CD8-positive, alpha-beta memory T cell (primary cell): ENCODE measurements at regions of chr3 and their contacts with region 1.

Region 1: GRCh38 chr3:120596116-120596852 is at the start of gene NDUFB4:
- DNase-seq: peak; percentile 92 to 98 (median 95)
- H3K4me3 ChIP-seq: peak within 1 kb of the TSS; percentile 99
- H3K4me3 Mint-ChIP-seq: peak within 1 kb of the TSS in 6 of 7 donors; percentile 86 to 99 (median 90)
- H3K27ac ChIP-seq: peak within 1 kb of the TSS; percentile 96
- H3K27ac Mint-ChIP-seq: peak within 1 kb of the TSS in 7 of 8 donors; percentile 96 to 100 (median 98)
- H3K4me1 ChIP-seq: peaks cover 35% of the 10 kb centered on the region
- H3K4me1 Mint-ChIP-seq: peaks cover 7 to 13% (median 10%) of the 10 kb centered on the region in 3 donors
- H3K27me3 ChIP-seq: no peaks in the 10 kb centered on the region
- H3K27me3 Mint-ChIP-seq: peaks cover 0 to 2% of the 10 kb centered on the region in 2 donors
- total RNA-seq, gene NDUFB4: 102 to 103 TPM

Region 2: DNA sequence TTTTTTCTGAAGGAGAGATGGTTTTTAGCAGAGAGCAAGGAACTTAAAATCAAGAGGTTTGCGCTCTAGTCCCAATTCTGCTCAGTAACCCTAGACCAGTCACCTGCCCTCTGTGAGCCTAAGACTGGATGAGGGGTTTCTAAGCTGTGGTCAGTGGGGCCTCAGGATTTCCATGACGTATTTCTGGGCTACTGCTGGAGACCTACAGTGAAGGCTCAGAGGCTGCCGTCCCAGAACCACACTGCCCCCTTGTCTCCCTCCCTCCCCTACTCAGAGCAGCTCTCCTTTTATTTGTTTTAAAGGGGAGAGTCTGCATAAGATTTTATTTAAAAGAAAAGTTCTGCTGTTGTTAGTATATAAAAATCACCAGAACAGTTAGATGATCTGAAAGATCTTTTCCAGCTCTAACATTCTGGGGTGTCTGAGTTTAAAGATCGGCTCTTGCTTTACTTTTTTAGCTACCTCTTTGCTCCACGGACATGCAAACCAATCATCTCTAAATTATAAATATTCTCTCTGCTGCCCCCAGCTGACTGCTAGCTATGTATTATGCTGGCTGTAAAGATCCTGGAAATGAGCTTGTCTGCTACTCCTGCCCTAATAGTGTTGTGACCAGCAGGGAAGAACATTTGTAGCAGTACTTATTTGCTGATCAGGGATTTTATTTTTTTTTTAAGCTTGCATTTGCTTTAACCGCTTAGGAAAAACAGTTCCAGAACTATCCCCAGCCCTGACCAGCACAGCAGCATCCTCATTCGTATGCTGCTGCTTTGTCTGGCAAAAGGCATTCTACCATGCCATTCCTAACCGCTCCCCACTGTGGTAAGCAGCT is 28.7 kb before region 1 on chr3:
- CTCF ChIA-PET with region 1: interaction called, 11 read pairs
- POLR2A ChIA-PET with region 1: no interaction called
- DNase-seq: no peak
- H3K4me3 ChIP-seq: no peak overlapping the region
- H3K4me3 Mint-ChIP-seq: peak overlapping the region in 5 of 7 donors; percentile 29 to 69 (median 44)
- H3K27ac ChIP-seq: no peak overlapping the region
- H3K27ac Mint-ChIP-seq: peak overlapping the region in 4 of 8 donors; percentile 13 to 40 (median 32)
- H3K4me1 ChIP-seq: no peaks in the 10 kb centered on the region
- H3K4me1 Mint-ChIP-seq: peaks cover 4 to 5% (median 4%) of the 10 kb centered on the region in 3 donors
- H3K27me3 ChIP-seq: no peaks in the 10 kb centered on the region
- H3K27me3 Mint-ChIP-seq: peaks cover 6 to 36% of the 10 kb centered on the region in 2 donors

Region 3: DNA sequence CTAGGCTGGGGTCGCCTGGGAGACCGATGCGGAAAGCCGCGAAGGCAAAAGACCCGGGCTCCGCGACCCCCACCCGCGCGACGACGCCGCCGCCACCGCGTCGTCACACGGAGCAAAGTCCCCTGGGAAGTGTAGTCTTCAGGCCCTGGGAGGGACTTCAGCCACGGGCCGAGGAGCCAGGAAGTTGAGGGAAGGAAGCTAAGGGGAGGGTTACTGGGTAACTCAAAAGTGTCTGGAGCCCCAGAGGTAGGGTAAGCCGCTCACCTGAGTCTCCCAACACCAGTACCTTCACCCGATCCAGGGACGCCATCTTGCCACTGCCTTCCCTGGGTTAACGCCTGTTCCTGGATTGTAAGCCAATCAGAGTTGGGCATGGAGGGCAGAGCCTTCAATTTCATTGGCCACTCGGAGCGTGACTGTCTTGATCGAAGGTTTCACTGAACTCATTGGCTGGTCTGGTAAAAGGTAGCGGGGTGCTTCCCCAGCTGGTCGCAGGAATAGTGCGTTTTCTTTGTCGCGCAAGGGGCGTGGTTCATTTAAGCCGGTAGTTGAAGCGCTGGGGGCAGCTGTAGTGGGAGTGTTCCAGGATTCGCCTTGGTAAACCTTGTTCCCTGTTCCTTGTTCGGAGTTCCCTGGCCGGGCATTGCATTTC is 146.0 kb after region 1 on chr3 and contains the starts of genes GTF2E1 and RABL3:
- CTCF ChIA-PET with region 1: interaction called, 11 read pairs
- POLR2A ChIA-PET with region 1: interaction called, 12 read pairs
- DNase-seq: peak; percentile 92 to 97 (median 96)
- H3K4me3 ChIP-seq: peak within 1 kb of the TSS; percentile 99
- H3K4me3 Mint-ChIP-seq: peak within 1 kb of the TSS; percentile 87 to 96 (median 94)
- H3K27ac ChIP-seq: peak within 1 kb of the TSS; percentile 99
- H3K27ac Mint-ChIP-seq: peak within 1 kb of the TSS; percentile 93 to 99 (median 98)
- H3K4me1 ChIP-seq: peaks cover 13% of the 10 kb centered on the region
- H3K4me1 Mint-ChIP-seq: peaks cover 31 to 56% (median 50%) of the 10 kb centered on the region in 3 donors
- H3K27me3 ChIP-seq: no peaks in the 10 kb centered on the region
- H3K27me3 Mint-ChIP-seq: no peaks in the 10 kb centered on the region
- total RNA-seq, gene GTF2E1: 25.9 to 27.8 TPM
- total RNA-seq, gene RABL3: 39.0 to 40.4 TPM